ENCODE measurements at regions of chr17 and their contacts with region 1.

Region 1: DNA sequence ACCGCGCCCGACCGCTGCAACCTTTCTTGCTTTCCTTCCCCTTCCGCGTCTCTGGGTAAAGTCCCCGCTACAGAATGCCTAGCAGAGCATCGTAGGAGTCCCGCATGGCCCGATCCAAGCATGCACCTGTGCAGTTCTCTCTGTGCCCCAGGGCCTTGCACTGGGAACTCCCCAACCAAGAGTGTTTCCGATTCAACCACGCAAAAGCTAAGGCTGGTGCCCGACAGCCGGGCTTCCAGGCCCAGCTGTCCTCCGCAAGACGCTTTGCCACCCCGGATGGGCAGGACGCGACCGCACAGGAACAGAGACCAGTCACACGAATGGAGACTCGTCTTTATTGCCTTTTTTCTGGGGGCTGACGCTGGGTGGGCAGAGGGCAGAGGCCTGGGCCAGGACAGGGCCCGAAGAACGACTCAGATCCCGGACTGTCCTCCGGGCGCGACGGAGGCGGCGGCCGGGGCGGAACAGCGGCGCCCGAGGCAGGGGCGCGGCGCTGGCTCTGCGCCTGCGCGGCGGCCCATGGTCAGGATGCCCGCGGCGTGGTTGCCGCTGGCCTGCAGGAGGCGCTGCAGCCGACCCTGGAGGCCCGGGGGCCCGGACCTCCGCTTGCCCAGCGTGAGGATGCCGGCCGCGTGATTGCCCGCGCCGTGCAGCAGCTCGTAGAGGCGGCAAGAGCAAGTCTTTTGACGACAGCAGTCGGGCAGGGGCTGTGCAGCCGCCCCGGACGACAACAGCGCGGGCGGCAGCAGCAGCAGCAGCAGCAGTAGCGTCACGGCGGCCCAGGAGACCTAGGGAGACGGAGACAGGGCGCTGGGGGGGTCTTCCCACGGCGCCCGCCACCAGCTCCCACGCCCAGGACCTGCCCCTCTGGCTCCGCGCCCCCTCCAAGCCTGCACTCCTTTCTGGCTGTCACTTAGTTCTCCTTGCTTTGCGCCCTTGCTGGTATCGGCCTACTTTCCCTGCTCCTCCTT is 1.2 kb downstream of the HCRT start:
- DNase-seq: peak; percentile 91 to 98 (median 96)
- ATAC-seq: peak; percentile 81
- H3K4me3 ChIP-seq: peak overlapping the region; percentile 65
- H3K27ac ChIP-seq: peak overlapping the region; percentile 66
- H3K4me1 ChIP-seq: peaks cover 31 to 47% of the 10 kb centered on the region in 2 experiments
- H3K27me3 ChIP-seq: no peaks in the 10 kb centered on the region
- CTCF ChIP-seq: peak; percentile 78 to 92 (median 91)
- EP300 ChIP-seq: no peak
- POLR2A ChIP-seq: peak; percentile 56; the same call in 1 of the 2 replicates
- RAD21 ChIP-seq: peak; percentile 49 to 61; a peak in 3 of 4 replicates

Region 2: DNA sequence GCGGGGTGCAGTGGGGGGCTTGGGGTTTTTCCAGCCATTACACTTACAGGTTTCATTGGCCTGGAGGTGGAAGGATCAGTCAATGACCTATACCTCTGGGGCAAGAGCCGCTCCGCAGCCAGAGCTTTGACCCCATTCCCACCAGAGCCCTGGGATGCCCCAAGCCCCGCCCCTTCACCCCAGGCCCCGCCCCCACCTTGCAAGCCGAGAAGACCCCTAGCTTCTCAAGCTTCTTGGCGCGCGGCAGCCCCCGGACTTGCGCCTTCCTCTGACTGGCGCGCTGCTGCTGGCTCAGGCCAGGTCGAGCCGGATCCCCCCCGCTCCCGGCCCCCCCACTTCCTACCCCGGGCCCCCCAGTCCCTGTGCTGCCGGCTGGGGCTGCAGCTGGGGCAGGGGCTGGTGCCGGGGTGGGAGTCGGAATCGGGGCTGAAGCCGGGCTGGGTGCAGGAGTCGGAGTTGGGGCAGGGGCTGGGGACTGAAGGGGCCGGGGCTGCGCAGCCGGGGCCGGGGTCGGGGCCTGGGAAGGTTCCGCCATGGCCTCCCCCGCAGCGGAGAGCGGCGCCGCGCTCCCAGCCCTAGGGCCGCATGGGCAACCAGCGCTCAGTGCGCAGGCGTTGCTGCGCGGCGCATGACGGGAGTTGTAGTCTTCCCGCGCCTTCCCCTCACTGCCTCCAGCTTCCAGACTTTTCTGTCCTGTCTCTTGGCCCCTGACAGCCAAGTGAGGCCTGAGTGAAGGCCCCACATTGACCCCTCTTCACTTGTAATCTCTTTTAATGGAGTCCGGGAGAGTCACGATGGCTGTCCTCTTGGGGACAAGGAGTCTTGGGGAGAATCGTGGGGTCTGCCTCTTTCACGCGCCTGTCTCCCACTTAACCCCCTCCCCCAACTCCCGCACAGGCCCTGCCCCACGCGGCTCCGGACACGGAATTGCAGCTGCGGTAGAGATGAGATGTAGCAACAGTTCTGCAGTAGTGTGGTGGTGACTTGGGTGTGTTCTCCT is 63.0 kb before region 1 on chr17 and contains the start of gene KAT2A:
- CTCF ChIA-PET with region 1: interaction called, 12 read pairs
- POLR2A ChIA-PET with region 1: no interaction called
- in situ Hi-C with region 1: no loop called
- intact Hi-C with region 1: loop called (anchors 2 kb)
- DNase-seq: peak; percentile 92 to 95 (median 94)
- ATAC-seq: peak; percentile 97
- H3K4me3 ChIP-seq: peak within 1 kb of the TSS; percentile 66
- H3K27ac ChIP-seq: peak within 1 kb of the TSS; percentile 67
- H3K4me1 ChIP-seq: peaks cover 13 to 47% of the 10 kb centered on the region in 2 experiments
- H3K27me3 ChIP-seq: no peaks in the 10 kb centered on the region
- CTCF ChIP-seq: no peak
- EP300 ChIP-seq: no peak
- POLR2A ChIP-seq: peak; percentile 71
- RAD21 ChIP-seq: no peak
- polyA plus RNA-seq, gene KAT2A: 1.5 to 4.9 TPM

Measured in K562 (cell line).